ENCODE measurements at regions of chr9 and their contacts with region 1.

Region 1: DNA sequence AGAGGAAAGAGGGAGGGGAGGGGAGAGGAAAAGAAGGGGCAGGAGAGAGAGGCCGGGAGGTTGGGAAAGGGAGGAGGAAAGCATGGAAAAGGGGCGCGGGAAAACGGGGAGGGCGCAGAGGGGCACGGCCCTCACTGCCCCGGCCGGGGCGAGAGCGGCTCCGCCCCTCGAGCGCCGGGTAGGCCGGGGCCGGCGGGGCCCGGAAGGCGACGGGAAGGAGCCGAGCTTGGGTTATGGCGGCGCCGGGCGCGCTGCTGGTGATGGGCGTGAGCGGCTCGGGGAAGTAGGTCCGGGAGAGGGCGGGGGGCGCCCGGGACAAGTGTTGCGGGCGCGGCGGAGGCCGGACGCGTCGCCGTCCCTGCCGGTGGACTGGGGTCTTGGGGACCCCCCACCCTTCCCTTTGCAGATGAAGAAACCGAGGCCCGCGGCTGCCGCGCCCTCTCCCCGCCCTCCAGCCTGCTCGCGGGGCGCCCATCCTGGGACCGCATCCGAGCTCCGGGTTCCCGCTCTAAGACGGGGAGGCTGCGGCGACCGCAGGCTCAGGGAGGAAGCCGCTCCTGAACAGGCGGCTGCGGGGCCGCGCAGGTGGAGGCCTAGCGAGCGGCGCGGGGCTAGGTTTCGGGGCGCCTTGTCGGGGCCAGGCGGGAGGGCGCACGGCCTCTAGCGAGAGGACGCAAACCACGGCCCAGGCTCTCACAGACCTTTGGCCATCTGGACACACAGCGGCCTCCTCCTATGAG is at the start of gene IDNK:
- DNase-seq: peak; percentile 23
- H3K4me3 ChIP-seq: peak within 1 kb of the TSS; percentile 68
- H3K27ac ChIP-seq: peak within 1 kb of the TSS; percentile 89
- H3K4me1 ChIP-seq: peaks cover 19% of the 10 kb centered on the region
- H3K27me3 ChIP-seq: no peaks in the 10 kb centered on the region
- CTCF ChIP-seq: no peak
- total RNA-seq, gene IDNK: 1.6 and 1.7 TPM in 2 replicates

Region 2: DNA sequence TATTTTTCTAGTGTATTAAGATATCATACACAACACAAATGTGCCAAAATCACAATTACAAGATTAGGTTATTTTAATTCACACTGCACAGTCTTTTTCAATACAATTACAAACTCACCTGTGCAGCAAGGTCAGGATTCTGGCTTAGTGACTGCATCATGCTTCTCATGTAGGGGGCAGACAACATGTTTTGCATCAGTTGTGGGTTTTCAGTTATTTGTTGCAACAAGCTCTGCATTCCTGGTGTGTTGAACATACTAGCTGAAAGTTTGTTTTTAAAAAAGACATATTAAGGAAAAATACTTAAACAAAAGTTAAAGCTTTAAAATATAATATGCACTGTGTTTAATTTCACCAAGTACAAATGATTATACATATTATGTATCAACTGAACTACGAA is 46.0 kb after region 1 on chr9:
- CTCF ChIA-PET with region 1: no interaction called
- POLR2A ChIA-PET with region 1: no interaction called
- intact Hi-C with region 1: no loop called
- DNase-seq: no peak
- H3K4me3 ChIP-seq: no peak overlapping the region
- H3K27ac ChIP-seq: no peak overlapping the region
- H3K4me1 ChIP-seq: peaks cover 27% of the 10 kb centered on the region
- H3K27me3 ChIP-seq: no peaks in the 10 kb centered on the region
- CTCF ChIP-seq: no peak

Region 3: GRCh38 chr9:83707768-83708514 is 84.8 kb after region 1 on chr9 and contains the start of gene UBQLN1:
- CTCF ChIA-PET with region 1: no interaction called
- POLR2A ChIA-PET with region 1: no interaction called
- intact Hi-C with region 1: loop called (anchors 2 kb)
- DNase-seq: peak; percentile 91
- H3K4me3 ChIP-seq: peak within 1 kb of the TSS; percentile 95
- H3K27ac ChIP-seq: peak within 1 kb of the TSS; percentile 100
- H3K4me1 ChIP-seq: no peaks in the 10 kb centered on the region
- H3K27me3 ChIP-seq: no peaks in the 10 kb centered on the region
- CTCF ChIP-seq: no peak
- total RNA-seq, gene UBQLN1: 154 and 162 TPM in 2 replicates

Region 4: DNA sequence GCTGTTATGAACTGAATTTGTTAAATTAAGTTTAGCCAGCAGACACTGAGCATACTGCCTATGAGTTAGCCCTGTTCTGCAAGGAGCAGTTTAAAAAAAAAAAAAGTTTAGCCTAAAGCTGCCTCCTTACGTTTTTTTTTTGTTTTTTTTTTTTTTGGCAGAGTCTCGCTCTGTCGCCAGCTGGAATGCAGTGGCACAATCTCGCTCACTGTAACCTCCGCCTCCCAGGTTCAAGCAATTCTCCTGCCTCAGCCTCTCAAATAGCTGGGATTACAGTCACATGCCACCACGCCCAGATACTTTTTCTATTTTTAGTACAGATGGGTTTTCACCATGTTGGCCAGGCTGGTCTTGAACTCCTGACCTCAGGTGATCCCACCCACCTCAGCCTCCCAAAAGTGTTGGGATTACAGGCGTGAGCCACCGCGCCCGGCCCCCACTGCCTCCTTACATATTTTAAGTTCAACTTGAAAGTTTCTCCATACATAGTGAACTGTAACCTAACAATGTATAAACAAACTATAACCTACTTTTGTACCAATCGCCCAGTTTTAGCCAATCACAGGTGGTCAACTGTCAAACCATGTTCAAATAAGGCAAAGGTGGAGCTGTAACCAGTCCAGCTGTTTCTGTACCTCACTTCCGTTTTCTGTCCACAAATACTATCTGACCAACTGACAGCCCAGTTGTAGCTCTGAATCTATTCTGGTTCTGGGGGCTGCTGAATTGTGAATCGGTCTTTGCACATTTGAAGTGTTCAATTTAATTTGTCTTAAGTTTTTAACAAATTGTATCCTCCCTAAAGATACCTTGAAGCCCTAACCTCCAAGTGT is 177.3 kb after region 1 on chr9:
- CTCF ChIA-PET with region 1: no interaction called
- POLR2A ChIA-PET with region 1: no interaction called
- intact Hi-C with region 1: no loop called
- DNase-seq: no peak
- H3K4me3 ChIP-seq: no peak overlapping the region
- H3K27ac ChIP-seq: no peak overlapping the region
- H3K4me1 ChIP-seq: no peaks in the 10 kb centered on the region
- H3K27me3 ChIP-seq: no peaks in the 10 kb centered on the region
- CTCF ChIP-seq: no peak

Region 5: GRCh38 chr9:84261082-84261746 is 638.1 kb after region 1 on chr9:
- CTCF ChIA-PET with region 1: no interaction called
- POLR2A ChIA-PET with region 1: no interaction called
- intact Hi-C with region 1: loop called (anchors 5 kb)
- DNase-seq: peak; percentile 82
- H3K4me3 ChIP-seq: no peak overlapping the region
- H3K27ac ChIP-seq: no peak overlapping the region
- H3K4me1 ChIP-seq: no peaks in the 10 kb centered on the region
- H3K27me3 ChIP-seq: no peaks in the 10 kb centered on the region
- CTCF ChIP-seq: peak; percentile 87

Measured in A673 (cell line).